ENCODE measurements at regions of chr2 and their contacts with region 1.

Region 1: DNA sequence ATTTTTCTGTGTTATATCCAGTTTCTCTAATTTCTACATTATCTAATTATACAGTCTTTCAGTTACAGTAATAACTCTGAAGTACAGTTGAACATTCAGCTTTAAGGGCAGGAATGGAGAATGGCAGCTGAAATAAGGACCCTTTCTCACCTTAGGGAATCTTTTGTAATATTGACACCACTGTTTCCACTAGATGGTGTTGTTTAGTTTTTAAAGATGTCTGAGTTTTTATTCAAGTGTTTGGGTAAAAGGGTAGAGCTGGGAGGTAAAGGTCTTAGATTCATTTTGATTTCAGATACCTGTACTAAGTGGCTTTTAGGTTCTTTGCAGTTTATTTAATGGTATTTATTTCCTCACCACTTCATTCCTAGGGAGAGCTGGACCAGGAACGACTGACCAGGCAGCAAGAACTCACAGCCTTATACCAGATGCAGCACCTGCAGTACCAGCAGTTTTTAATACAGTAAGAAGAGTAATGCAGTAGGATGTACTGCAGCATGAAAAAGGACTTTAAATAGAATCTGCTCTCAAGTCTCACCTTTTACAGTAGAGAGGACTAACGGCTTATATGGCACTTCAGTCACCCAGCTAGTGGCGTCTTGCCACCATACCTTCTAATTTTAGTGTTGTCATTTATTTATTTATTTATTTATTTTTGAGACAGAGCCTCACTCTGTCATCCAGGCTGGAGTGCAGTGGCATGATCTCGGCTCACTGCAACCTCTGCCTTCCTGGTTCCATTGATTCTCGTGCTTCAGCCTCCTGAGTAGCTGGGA is 33.2 kb upstream of the KCNJ13 start:
- DNase-seq: no peak

Region 2: DNA sequence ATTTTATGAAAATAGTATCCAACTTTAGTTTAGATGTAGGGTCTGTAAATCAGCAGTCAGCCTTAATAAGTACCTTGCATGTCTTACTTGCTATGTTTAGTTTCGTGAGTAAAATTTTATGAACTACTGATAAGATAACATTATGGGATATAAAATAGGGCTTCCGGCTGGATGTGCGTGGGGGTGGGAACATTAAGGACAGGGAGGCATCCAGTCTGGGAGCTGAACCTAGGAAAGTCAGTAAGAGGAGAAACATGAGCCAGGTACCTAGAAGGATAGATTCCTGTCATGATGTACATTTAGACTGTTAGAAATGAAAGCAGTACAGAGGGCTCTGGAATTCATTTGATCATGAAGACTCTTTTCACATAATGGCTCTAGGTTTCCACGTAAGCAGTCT is 20.5 kb before region 1 on chr2:
- intact Hi-C with region 1: no loop called
- DNase-seq: no peak

Region 3: GRCh38 chr2:232835687-232836208 is 26.2 kb after region 1 on chr2:
- intact Hi-C with region 1: loop called in 1 of 2 experiments (anchors 2 kb)
- DNase-seq: no peak

Region 4: GRCh38 chr2:232887171-232887850 is 77.8 kb after region 1 on chr2:
- intact Hi-C with region 1: no loop called
- DNase-seq: peak; percentile 51

Region 5: DNA sequence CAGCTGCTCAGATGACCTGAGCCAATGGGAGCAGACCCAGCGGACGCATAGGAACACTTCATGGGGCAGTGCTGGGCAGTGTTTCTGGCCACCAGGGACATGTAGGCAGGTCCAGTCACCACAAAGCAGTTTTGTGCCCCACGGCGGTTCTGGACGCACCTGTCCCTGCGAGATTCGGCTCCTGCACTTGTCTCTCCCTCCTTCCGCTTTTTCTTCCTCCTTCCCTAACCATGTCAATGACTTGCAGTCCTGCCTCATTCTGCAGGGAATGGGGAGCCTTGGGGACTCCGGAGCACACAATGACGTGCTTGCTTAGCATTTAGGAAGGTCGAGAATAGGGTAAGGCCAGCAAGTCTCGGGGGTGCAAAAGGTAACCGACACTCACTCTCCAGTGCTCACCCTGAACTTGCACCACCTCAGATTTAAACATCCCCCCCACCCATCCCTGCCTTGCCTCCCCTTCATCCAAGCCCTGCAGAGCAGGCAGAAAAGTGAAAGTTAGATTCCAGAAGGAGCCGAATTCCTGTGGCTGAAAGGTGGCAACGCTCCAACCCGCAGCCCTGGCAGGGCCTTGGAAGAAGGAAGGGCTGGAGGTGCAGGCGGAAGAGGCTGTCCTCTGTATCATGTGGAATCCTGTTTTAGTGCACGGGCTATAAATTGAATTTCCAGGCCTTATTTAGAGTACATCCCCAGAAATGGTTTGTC is 401.5 kb after region 1 on chr2:
- intact Hi-C with region 1: no loop called
- DNase-seq: peak; percentile 93

Measured in posterior vena cava (tissue), 2 donors.